GM12878 (cell line): ENCODE measurements at regions of chr4 and their contacts with region 1.

Region 1: DNA sequence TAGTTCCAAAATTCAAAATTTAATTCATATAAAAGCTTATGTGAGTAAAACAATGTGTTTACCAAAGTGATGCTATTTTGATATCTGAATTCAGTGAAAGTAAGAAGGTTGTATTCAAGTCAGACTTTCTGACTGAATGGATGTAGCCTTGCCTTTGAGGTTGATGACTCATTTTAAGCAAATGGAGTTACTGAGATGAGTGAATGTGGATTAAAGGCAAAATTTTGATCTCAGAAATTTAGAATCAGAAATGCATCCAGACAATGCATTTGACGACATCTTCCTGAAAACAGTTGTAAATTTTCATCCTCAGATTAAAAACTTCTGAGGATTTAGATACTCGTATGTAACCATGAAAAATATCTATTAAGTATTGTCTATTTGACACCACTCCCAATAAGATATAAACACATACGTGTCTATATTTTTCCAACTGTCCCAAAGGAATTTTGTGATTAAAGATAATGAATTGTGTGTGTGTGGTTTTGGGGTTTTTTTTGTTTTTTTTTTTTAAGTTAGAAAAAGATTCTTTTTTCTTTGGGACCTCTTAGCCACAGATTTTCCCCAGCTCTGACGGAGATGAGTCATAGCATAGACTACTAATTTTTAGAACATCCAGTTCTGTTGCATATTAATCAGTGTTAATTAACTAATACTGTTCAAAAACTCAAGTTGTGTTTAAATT is 34.4 kb downstream of the NFKB1 start:
- DNase-seq: no peak
- ATAC-seq: peak; percentile 78
- H3K4me3 ChIP-seq: no peak overlapping the region
- H3K27ac ChIP-seq: peak overlapping the region; percentile 29; the same call in 1 of the 2 replicates
- H3K4me1 ChIP-seq: peaks cover 17% of the 10 kb centered on the region
- H3K27me3 ChIP-seq: no peaks in the 10 kb centered on the region
- CTCF ChIP-seq: no peak
- EP300 ChIP-seq: peak in 1 of 2 experiments; percentile 77; a peak in 2 of 4 replicates
- POLR2A ChIP-seq: no peak
- RAD21 ChIP-seq: no peak

Region 2: GRCh38 chr4:102518703-102519131 is 16.8 kb before region 1 on chr4:
- CTCF ChIA-PET with region 1: interaction called, 4 read pairs
- POLR2A ChIA-PET with region 1: interaction called, 8 read pairs
- RAD21 ChIA-PET with region 1: interaction called, 5 read pairs
- SMC1A ChIA-PET with region 1: interaction called, 42 read pairs
- in situ Hi-C with region 1: no loop called
- intact Hi-C with region 1: no loop called
- DNase-seq: no peak
- ATAC-seq: peak; percentile 46
- H3K4me3 ChIP-seq: no peak overlapping the region
- H3K27ac ChIP-seq: no peak overlapping the region
- H3K4me1 ChIP-seq: peaks cover 10% of the 10 kb centered on the region; the same call in 1 of the 2 replicates
- H3K27me3 ChIP-seq: no peaks in the 10 kb centered on the region
- CTCF ChIP-seq: no peak
- EP300 ChIP-seq: no peak
- POLR2A ChIP-seq: no peak
- RAD21 ChIP-seq: no peak

Region 3: GRCh38 chr4:102883278-102883677 is 347.7 kb after region 1 on chr4:
- CTCF ChIA-PET with region 1: no interaction called
- POLR2A ChIA-PET with region 1: no interaction called
- RAD21 ChIA-PET with region 1: no interaction called
- SMC1A ChIA-PET with region 1: no interaction called
- in situ Hi-C with region 1: no loop called
- intact Hi-C with region 1: no loop called
- DNase-seq: no peak
- ATAC-seq: no peak
- H3K4me3 ChIP-seq: no peak overlapping the region
- H3K27ac ChIP-seq: no peak overlapping the region
- H3K4me1 ChIP-seq: no peaks in the 10 kb centered on the region
- H3K27me3 ChIP-seq: no peaks in the 10 kb centered on the region
- CTCF ChIP-seq: no peak
- EP300 ChIP-seq: no peak
- POLR2A ChIP-seq: no peak
- RAD21 ChIP-seq: no peak